ENCODE measurements at regions of chr10 and their contacts with region 1.

Region 1: DNA sequence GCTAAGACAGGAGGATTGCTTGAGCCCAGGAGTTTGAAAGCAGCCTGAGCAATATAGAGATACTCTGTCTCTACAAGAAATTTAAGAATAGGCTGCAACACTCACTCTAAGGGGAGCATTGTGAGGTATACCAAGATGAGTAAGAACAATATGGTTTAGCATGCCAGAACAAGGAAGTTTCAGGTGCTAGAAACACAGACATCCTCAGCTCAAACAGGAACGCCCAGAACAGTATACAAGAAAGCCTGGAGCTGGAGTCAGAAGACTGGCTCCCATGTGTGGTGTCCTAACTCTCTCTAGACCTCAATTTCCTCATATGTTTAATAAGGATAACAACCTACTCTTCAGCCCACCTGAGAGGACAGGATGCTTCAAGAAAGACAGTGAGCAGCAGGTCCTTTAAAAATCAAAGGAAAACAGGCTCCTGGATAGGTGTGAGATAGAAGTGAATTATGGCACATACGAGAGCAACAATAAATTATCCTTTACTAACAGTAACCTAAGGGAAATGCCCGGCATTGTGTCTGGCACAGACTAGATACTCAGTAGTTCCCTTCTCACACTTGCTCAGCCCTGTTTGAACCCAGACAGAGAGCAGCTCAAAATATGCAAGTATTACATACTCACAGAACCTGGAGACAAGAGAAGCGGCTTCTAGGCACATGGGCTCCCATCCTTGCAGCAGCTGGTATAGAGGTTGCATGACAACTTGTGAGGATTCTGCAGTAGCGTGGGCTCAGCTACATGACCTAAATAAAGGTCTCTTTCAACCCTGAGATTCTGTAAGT is 45.4 kb downstream of the KAT6B start:
- DNase-seq: peak; percentile 53
- H3K4me3 Mint-ChIP-seq: peak overlapping the region; percentile 62
- H3K27ac Mint-ChIP-seq: peak overlapping the region; percentile 73
- H3K4me1 Mint-ChIP-seq: peaks cover 61% of the 10 kb centered on the region
- H3K27me3 Mint-ChIP-seq: no peaks in the 10 kb centered on the region

Region 2: GRCh38 chr10:74502963-74503608 is 368.7 kb before region 1 on chr10:
- CTCF ChIA-PET with region 1: no interaction called
- intact Hi-C with region 1: loop called (anchors 5 kb)
- DNase-seq: no peak
- H3K4me3 Mint-ChIP-seq: no peak overlapping the region
- H3K27ac Mint-ChIP-seq: peak overlapping the region; percentile 75
- H3K4me1 Mint-ChIP-seq: peaks cover 52% of the 10 kb centered on the region
- H3K27me3 Mint-ChIP-seq: no peaks in the 10 kb centered on the region

Region 3: DNA sequence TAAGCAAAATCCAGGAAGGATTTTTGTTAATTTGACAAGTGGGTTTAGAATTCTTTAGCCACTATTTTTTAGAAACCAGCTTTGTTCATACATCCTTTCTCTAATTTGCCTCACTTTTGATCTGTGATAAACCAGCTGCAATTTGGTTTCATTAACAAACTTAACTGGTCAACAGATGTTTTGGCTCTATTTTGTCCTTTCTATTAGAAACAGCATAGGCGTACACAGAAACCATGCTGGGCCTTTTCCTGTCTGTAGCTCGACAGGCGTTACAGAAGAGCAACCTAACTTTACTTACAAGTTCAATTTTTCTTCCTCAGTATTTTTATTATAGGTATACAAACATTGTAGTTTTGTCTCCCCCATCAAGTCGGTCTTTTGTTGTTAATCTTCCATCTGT is 17.2 kb before region 1 on chr10:
- CTCF ChIA-PET with region 1: no interaction called
- intact Hi-C with region 1: loop called (anchors 1 kb)
- DNase-seq: no peak
- H3K4me3 Mint-ChIP-seq: peak overlapping the region; percentile 25
- H3K27ac Mint-ChIP-seq: peak overlapping the region; percentile 38
- H3K4me1 Mint-ChIP-seq: peaks cover 40% of the 10 kb centered on the region
- H3K27me3 Mint-ChIP-seq: no peaks in the 10 kb centered on the region

Region 4: DNA sequence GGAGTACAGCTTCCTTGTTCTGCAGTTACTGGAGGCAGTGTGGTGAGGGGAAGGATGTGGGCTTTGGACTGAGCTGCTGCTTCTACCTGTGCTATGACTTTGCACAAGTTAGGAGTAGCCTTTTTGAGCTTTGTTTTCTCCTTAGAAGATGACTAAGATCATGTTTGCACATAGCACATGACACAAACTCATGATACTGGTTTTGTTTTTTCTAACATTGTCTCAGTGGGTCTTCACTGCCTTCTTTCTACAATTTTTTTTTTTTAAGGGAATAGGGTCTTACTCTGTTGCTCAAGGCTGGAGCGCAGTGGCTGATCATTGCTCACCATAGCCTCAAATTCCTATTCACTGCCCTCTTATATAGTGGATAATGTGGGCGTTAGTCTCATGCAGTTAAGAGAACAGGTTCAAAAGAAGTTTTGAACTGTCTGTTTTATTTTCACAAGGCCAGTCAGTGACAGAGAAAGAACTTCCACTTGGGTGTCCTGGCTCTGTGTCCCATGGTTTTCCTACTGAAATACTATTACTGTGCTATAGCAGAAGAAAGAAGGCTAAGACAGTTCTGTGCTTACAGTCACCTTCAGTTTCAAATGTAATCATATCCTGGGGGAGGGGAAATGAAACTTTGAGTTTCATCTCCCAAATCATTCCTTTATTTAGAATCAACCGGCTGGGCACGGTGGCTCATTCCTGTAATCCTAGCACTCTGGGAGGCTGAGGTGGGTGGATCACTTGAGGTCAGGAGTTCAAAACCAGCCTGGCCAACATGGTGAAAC is 26.6 kb after region 1 on chr10:
- CTCF ChIA-PET with region 1: interaction called, 3 read pairs
- intact Hi-C with region 1: loop called (anchors 1 kb)
- DNase-seq: peak; percentile 70
- H3K4me3 Mint-ChIP-seq: no peak overlapping the region
- H3K27ac Mint-ChIP-seq: peak overlapping the region; percentile 46
- H3K4me1 Mint-ChIP-seq: peaks cover 57% of the 10 kb centered on the region
- H3K27me3 Mint-ChIP-seq: no peaks in the 10 kb centered on the region